CD4-positive, alpha-beta T cell (primary cell): ENCODE measurements at regions of chr7 and their contacts with region 1.

Region 1: DNA sequence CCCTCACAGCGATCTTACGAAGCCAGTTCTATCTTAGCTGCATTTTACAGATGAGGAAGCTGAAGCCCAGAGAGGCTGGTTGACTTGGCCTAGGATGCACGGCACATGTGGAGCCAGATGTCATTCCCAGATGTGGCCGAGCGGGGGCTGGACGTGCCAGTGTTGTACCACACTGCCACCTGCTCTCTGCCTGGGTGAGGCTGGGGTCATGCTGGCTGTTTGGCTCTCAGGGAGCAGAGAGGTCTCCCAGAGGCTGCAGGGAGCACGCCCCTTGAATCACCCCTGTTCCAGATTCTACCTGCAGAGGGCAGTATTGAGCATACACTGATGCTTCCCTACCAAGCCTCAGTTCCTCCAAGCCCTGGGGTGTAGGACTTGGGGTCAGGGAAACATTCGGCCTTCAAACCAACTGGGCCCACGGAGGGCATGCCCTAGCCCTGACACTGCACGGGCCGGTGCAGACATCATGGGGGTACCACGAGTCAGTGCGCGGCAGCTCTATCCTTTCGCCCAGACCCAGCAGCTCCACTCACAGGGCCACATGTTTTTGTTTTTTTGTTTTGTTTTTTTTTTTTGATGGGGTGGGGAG is 3.8 kb upstream of the GTF2IRD1 start:
- DNase-seq: peak; percentile 47 to 86 (median 61)
- ATAC-seq: peak; percentile 12
- H3K4me3 ChIP-seq: no peak overlapping the region
- H3K4me3 Mint-ChIP-seq: peak overlapping the region; percentile 49
- H3K27ac ChIP-seq: no peak overlapping the region
- H3K27ac Mint-ChIP-seq: peak overlapping the region; percentile 73
- H3K4me1 ChIP-seq: peaks cover 38% of the 10 kb centered on the region
- H3K4me1 Mint-ChIP-seq: peaks cover 17% of the 10 kb centered on the region
- H3K27me3 ChIP-seq: no peaks in the 10 kb centered on the region
- H3K27me3 Mint-ChIP-seq: no peaks in the 10 kb centered on the region
- CTCF ChIP-seq: peak; percentile 77

Region 2: DNA sequence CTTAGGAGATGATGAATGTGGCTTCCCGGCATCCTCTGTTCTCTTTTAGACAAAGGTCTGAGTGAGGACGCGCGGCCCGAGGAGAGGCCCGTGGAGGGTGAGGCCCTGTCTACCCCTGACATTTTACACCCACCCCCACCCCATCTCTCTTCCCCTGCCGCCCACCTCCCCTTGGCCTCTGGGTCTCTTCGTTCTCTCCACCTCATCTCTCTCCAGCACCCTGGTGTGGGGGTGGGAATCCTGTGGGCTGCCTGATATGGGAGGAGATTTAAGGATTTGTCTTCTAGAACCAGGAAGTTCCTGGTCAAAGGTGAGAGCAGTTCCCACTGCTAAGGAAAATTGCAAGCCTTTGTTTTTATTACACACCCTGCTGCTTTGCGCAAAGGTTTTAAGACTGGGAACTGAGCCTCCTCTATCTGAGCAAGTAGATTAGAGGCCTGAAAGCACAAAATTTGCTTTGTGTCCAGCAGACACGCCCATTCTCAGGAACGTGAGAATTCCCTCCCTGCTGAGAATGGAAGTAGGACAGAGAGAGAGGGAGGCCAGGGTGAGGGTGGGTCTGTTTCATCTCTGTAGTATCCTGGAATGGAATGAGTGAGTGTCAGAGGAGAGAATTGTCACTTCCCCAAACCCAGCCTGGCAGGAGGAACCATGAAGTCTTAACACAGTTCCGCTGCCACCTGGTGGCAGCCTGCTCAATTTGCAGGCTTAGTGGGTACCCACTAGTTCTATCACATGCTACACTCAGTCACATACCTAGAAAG is 95.0 kb after region 1 on chr7:
- CTCF ChIA-PET with region 1: no interaction called
- POLR2A ChIA-PET with region 1: no interaction called
- intact Hi-C with region 1: loop called in 1 of 2 experiments (anchors 5 kb)
- DNase-seq: peak in 6 of 14 experiments; percentile 2 to 49 (median 18)
- ATAC-seq: no peak
- H3K4me3 ChIP-seq: no peak overlapping the region
- H3K4me3 Mint-ChIP-seq: no peak overlapping the region
- H3K27ac ChIP-seq: no peak overlapping the region
- H3K27ac Mint-ChIP-seq: no peak overlapping the region
- H3K4me1 ChIP-seq: no peaks in the 10 kb centered on the region
- H3K4me1 Mint-ChIP-seq: no peaks in the 10 kb centered on the region
- H3K27me3 ChIP-seq: no peaks in the 10 kb centered on the region
- H3K27me3 Mint-ChIP-seq: no peaks in the 10 kb centered on the region
- CTCF ChIP-seq: peak; percentile 33

Region 3: DNA sequence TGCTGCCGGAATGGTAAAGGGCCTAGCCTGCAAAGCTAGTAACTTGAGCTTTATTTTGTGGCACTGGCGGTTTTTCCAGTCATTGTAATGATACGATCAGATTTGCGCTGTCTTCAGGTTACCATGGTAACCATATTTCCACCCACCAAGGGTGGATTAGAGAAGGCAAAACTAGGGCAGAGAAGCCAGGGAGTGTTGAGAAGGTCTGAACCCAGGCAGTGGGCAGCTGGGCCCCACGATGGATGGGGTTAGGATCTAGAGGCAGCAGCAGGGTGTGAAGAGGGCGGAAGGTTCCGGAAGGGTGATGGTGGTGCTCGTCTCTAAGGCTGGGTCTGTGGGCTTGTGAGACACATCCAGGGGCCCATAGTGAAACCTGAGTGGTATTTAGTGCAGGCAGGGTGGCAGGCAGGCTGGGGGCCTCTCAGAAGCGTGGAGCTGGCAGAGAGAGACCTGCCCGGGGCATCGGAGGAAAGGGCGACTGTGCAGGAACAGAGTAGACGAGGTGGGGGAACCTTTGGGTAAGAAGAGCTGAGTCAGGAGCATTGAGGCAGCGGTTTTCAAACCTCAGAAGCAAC is 119.7 kb after region 1 on chr7:
- CTCF ChIA-PET with region 1: interaction called, 25 read pairs
- POLR2A ChIA-PET with region 1: no interaction called
- intact Hi-C with region 1: loop called (anchors 1 kb)
- DNase-seq: peak in 7 of 14 experiments; percentile 1 to 62 (median 25)
- ATAC-seq: peak; percentile 52
- H3K4me3 ChIP-seq: no peak overlapping the region
- H3K4me3 Mint-ChIP-seq: no peak overlapping the region
- H3K27ac ChIP-seq: peak overlapping the region in 1 of 2 donors; percentile 55
- H3K27ac Mint-ChIP-seq: peak overlapping the region; percentile 60
- H3K4me1 ChIP-seq: peaks cover 22% of the 10 kb centered on the region
- H3K4me1 Mint-ChIP-seq: peaks cover 13% of the 10 kb centered on the region
- H3K27me3 ChIP-seq: no peaks in the 10 kb centered on the region
- H3K27me3 Mint-ChIP-seq: no peaks in the 10 kb centered on the region
- CTCF ChIP-seq: no peak